Ascending aorta (tissue), 2 donors: ENCODE measurements at regions of chr9 and their contacts with region 1.

Region 1: GRCh38 chr9:35510745-35511428 is 21.0 kb downstream of the RUSC2 start:
- DNase-seq: peak; percentile 53 to 94
- H3K4me3 ChIP-seq: peak overlapping the region in 1 of 2 donors; percentile 22
- H3K27ac ChIP-seq: peak overlapping the region; percentile 94 to 95
- H3K4me1 ChIP-seq: peaks cover 13 to 65% of the 10 kb centered on the region in 2 donors
- H3K27me3 ChIP-seq: no peaks in the 10 kb centered on the region
- CTCF ChIP-seq: peak; percentile 39 to 52 (median 42)

Region 2: GRCh38 chr9:35395076-35395705 is 115.7 kb before region 1 on chr9:
- intact Hi-C with region 1: no loop called
- DNase-seq: no peak
- H3K4me3 ChIP-seq: no peak overlapping the region
- H3K27ac ChIP-seq: no peak overlapping the region
- H3K4me1 ChIP-seq: no peaks in the 10 kb centered on the region
- H3K27me3 ChIP-seq: no peaks in the 10 kb centered on the region
- CTCF ChIP-seq: no peak

Region 3: DNA sequence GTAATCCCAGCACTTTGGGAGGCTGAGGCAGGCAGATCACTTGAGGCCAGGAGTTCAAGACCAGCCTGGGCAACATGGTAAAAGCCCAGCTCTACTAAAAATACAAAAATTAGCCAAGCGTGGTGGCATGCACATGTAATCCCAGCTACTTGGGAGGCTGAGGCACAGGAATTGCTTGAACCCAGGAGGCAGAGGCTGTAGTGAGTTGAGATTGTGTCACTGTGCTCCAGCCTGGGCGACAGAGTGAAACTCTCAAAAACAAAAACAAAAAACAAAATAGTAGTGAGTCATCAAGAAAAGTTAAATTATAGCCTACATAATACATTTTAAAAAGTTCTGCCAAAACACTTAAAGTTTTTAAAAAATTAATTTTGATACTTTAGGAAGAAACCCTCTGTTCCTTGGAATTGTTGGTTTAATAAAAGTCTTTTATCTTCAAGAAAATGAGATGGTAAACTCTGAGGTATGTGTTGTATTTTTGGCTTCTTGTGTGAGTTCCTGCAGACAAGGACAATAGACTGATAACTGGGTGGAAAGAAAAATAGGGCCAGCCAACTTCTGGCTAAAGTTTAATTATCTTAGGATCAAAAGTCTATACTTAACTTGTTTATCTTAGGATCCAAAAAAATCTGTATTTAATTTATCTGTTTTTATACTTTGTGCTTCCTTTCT is 11.7 kb before region 1 on chr9:
- intact Hi-C with region 1: loop called (anchors 1 kb)
- DNase-seq: no peak
- H3K4me3 ChIP-seq: peak overlapping the region in 1 of 2 donors; percentile 5
- H3K27ac ChIP-seq: peak overlapping the region; percentile 83 to 89
- H3K4me1 ChIP-seq: peaks cover 0 to 39% of the 10 kb centered on the region in 2 donors
- H3K27me3 ChIP-seq: no peaks in the 10 kb centered on the region
- CTCF ChIP-seq: no peak